Transverse colon (tissue), 4 donors: ENCODE measurements at regions of chr4 and their contacts with region 1.

Region 1: DNA sequence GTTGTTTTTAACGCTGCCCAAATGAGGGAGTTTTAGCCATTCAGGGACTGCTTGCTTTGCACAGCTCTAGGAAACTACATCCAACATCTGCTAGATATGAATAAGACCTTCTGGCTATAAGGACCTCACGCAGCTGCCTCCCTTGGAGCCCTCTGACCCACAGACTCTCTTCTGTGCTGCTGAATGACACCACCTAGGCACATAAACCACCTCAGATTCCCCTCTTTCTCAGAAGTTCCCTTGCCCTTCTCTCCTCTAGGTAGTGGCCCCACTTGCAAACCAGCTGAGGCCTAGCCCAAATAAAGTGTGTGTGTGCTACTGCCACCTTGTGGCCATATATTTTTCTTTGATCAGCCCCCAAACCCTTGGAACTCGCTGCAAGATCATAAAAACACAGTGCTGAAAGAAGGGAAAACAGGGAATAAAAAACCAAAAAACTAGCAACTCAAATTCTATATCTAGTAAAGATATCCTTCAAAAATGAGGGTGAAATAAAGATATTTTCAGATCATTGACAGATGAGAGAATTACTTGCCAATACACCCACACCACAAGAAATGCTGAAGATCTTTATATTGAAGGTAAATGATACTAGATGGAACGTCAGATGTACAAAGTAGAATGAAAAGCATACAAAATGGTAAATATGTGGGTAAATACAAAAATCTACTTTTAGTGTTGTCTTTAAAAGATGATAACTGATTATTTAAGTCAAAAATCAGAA is 265.9 kb downstream of the ADAMTS3 start:
- DNase-seq: peak; percentile 13
- H3K4me3 ChIP-seq: no peak overlapping the region
- H3K27ac ChIP-seq: no peak overlapping the region
- H3K4me1 ChIP-seq: no peaks in the 10 kb centered on the region
- H3K27me3 ChIP-seq: no peaks in the 10 kb centered on the region
- CTCF ChIP-seq: peak; percentile 44 to 73 (median 60)
- EP300 ChIP-seq: no peak
- POLR2A ChIP-seq: no peak

Region 2: DNA sequence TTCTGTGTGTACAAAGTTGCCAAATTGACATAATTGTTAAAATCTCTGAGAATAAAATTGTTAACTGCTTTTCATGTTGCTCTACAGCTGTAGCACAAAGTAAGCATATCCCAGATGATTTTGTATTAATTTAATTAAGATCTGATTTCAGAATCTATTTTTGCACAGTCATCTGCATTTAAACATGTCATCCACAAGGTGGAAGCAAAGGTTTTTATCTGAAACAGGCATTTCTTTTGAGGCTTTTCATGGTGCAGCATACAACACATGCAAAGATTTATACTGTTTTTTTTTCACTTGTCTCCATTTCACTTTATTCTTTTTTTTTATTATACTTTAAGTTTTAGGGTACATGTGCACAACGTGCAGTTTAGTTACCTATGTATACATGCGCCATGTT is 570.4 kb before region 1 on chr4:
- in situ Hi-C with region 1: loop called in 1 of 4 experiments (anchors 25 kb)
- intact Hi-C with region 1: no loop called
- DNase-seq: no peak
- H3K4me3 ChIP-seq: no peak overlapping the region
- H3K27ac ChIP-seq: no peak overlapping the region
- H3K4me1 ChIP-seq: no peaks in the 10 kb centered on the region
- H3K27me3 ChIP-seq: no peaks in the 10 kb centered on the region
- CTCF ChIP-seq: peak; percentile 16 to 51 (median 42)
- EP300 ChIP-seq: no peak
- POLR2A ChIP-seq: no peak

Region 3: DNA sequence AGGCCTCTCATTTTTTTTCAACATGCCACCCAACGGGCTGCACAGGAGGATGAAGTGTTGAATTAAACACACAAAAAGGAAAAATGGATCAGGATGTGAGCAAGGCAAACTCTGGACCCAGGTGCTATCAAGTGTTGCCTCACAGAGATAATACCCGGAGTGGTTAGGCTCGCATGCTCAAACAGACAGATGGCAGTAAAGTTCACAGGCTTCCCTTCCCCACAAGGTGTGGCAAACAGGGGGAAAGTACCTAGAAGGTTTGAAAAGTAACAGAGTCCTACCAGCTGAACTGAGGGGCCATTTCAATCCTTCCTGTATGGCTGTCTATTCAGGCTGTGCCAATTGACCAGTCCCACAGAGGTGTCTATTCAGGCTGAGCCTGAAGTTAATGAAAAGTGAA is 395.4 kb before region 1 on chr4:
- in situ Hi-C with region 1: no loop called
- intact Hi-C with region 1: no loop called
- DNase-seq: peak; percentile 9
- H3K4me3 ChIP-seq: no peak overlapping the region
- H3K27ac ChIP-seq: no peak overlapping the region
- H3K4me1 ChIP-seq: no peaks in the 10 kb centered on the region
- H3K27me3 ChIP-seq: no peaks in the 10 kb centered on the region
- CTCF ChIP-seq: peak in 1 of 5 experiments; percentile 3
- EP300 ChIP-seq: no peak
- POLR2A ChIP-seq: no peak

Region 4: GRCh38 chr4:72468904-72469502 is 165.9 kb after region 1 on chr4:
- in situ Hi-C with region 1: loop called in 1 of 4 experiments (anchors 25 kb)
- intact Hi-C with region 1: no loop called
- DNase-seq: no peak
- H3K4me3 ChIP-seq: no peak overlapping the region
- H3K27ac ChIP-seq: no peak overlapping the region
- H3K4me1 ChIP-seq: no peaks in the 10 kb centered on the region
- H3K27me3 ChIP-seq: no peaks in the 10 kb centered on the region
- CTCF ChIP-seq: peak; percentile 42 to 57 (median 46)
- EP300 ChIP-seq: no peak
- POLR2A ChIP-seq: no peak